ENCODE measurements at regions of chr19 and their contacts with region 1.

Region 1: DNA sequence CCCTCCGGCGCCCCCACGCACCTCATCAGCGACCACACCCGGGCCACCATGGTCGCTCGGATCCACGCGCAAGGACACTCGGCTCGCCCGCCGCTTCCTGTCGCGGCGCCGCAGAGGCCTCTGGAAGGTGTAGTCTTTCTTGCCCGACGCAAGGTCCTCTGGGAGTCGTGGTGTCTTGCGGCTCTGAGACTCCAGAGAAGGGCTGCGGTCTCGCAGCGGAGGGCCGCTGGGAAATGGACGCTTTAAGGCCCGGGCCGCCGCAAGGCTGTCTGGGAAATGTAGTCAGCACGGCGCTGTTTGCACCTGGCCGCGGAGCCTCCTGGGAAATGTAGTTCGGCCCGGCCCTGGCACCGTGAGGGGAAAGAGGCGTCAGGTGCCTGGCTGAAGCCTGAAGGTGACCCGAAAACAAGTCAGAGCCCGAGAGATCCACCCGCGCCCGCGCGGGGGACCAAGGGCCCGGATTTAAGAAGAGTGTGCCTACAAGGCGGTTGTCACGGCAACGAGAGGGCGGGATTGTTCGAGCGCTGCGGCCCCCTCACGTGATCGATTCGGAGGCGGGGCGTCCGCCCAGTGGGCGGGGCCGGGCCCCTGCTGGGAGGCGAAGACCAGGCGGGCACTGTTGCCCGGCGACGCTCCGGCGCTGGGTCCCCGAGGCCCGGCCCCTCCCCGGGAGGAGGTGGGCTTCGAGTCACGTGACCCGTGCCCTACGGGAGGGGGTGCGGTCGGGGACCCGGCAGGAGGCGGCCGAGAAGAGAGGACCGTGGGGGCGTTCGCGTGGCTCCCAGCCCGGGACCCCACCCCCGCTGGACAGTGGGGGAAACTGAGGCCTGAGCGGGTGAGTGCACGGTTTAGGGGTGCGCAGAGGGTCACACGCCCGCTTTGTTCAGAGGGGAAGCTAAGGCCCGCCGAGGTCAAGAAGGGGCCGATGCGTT is at the starts of genes HSD11B1L and MICOS13:
- DNase-seq: peak; percentile 98 to 100 (median 99)

Region 2: GRCh38 chr19:5622463-5623396 is 58.0 kb before region 1 on chr19 and contains the starts of genes SAFB and SAFB2:
- intact Hi-C with region 1: loop called (anchors 2 kb)
- DNase-seq: peak; percentile 97 to 100 (median 98)

Region 3: GRCh38 chr19:5719961-5720790 is 39.5 kb after region 1 on chr19 and contains the starts of genes CATSPERD and LONP1:
- intact Hi-C with region 1: loop called (anchors 1 kb)
- DNase-seq: peak; percentile 96 to 100 (median 98)

Measured in posterior cingulate gyrus (tissue), 11 donors.